CD8-positive, alpha-beta T cell (primary cell): ENCODE measurements at regions of chr3 and their contacts with region 1.

Region 1: DNA sequence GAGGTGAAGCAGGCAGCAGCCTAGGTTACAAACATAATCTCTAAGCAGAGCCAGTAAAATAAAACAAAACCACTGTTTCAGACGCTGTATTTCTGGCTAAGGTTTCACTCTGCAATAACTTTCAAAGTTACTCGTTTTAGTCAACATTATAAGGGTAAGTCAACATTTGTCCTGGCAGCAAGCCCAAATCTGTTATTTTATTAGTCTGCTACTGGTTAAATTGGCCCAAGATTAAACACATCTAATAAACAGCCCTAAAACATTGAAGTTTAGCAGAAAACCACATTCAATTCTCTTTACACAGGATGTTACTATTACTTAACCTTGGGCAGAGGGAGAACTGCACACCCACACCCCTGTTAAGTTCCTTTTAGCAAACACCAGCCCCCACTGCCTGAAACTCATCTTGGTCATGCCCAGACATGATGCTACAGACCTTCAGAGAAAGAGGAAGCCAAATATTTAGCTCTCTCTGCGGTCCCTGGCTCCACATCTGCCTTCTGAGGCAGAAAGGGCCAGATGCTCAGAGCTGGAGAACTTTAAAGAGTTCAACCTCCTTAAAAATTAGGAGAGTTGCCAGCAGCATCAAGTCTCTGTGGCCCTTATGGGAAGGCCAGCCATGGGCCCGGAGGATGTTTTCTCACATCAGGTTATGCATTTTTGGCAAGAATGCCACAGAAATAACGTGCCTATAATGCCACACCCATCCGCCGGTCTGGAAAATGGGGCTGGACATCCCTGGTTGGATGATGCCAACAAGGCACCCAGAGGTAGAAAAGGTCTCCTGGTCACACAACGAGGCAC is 17.9 kb downstream of the ARHGEF3 start:
- DNase-seq: peak; percentile 46 to 91 (median 75)
- ATAC-seq: peak; percentile 79
- H3K4me3 ChIP-seq: peak overlapping the region; percentile 10 to 24
- H3K4me3 Mint-ChIP-seq: peak overlapping the region; percentile 67
- H3K27ac ChIP-seq: peak overlapping the region; percentile 51 to 80
- H3K27ac Mint-ChIP-seq: peak overlapping the region; percentile 88
- H3K4me1 ChIP-seq: peaks cover 98% of the 10 kb centered on the region
- H3K4me1 Mint-ChIP-seq: peaks cover 97% of the 10 kb centered on the region
- H3K27me3 ChIP-seq: no peaks in the 10 kb centered on the region
- H3K27me3 Mint-ChIP-seq: no peaks in the 10 kb centered on the region
- CTCF ChIP-seq: no peak

Region 2: DNA sequence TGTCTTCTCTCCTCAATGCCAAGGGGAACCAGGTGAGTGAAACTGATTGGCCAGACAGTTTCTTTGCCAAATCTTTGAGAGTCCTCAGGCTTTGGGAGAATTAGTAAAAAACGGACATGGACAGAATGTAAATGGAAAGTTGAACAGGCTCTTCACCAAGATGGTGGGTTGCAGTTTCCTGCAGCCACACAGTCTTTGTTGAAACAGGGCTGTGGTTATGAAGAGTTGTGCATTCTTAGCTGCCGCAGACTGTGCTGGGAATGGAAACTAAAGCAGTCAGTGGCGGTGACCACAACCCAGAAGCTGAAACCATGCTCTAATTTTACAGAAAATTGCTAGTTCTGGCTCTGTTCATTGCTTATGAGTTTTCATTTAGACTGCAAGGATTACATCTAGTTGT is 58.7 kb before region 1 on chr3:
- CTCF ChIA-PET with region 1: interaction called, 6 read pairs
- POLR2A ChIA-PET with region 1: interaction called, 11 read pairs
- intact Hi-C with region 1: loop called in 1 of 2 experiments (anchors 5 kb)
- DNase-seq: peak; percentile 25 to 86 (median 66)
- ATAC-seq: peak; percentile 89
- H3K4me3 ChIP-seq: no peak overlapping the region
- H3K4me3 Mint-ChIP-seq: peak overlapping the region; percentile 65
- H3K27ac ChIP-seq: peak overlapping the region in 1 of 2 experiments; percentile 43
- H3K27ac Mint-ChIP-seq: peak overlapping the region; percentile 92
- H3K4me1 ChIP-seq: peaks cover 46% of the 10 kb centered on the region
- H3K4me1 Mint-ChIP-seq: peaks cover 64% of the 10 kb centered on the region
- H3K27me3 ChIP-seq: no peaks in the 10 kb centered on the region
- H3K27me3 Mint-ChIP-seq: no peaks in the 10 kb centered on the region
- CTCF ChIP-seq: no peak

Region 3: DNA sequence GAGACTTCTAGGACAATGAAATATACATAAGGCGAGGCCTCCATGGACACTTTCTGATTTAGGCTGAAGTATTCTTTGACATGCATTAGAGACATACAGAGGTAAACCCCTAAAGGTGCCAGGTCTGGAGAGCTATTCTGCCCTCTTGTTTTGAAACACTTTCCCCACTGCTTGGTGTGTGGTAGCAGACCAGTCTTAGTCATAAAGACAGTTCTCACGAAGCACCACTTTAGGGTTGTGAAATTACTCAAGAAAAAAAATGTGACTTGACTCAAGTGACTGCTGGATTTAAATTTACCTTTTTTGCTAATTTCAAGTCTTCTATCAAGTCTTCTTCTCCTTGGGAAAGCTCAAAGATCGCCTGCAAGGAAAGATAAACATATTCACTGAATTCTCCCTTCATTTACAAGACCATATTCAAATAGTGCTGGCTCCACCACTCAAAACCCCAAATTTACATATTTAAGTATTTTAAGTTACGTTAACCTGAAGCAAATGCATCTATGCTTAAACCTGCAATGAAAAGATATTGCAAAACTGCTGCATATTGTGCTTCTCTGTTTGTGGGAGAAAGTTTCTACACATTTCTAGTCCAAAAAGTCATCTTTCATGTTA is 30.5 kb before region 1 on chr3:
- CTCF ChIA-PET with region 1: interaction called, 4 read pairs
- POLR2A ChIA-PET with region 1: interaction called, 15 read pairs
- intact Hi-C with region 1: no loop called
- DNase-seq: peak in 5 of 9 experiments; percentile 22 to 56 (median 45)
- ATAC-seq: peak; percentile 27
- H3K4me3 ChIP-seq: no peak overlapping the region
- H3K4me3 Mint-ChIP-seq: peak overlapping the region; percentile 47
- H3K27ac ChIP-seq: peak overlapping the region; percentile 62 to 79
- H3K27ac Mint-ChIP-seq: peak overlapping the region; percentile 100
- H3K4me1 ChIP-seq: peaks cover 52% of the 10 kb centered on the region
- H3K4me1 Mint-ChIP-seq: peaks cover 66% of the 10 kb centered on the region
- H3K27me3 ChIP-seq: no peaks in the 10 kb centered on the region
- H3K27me3 Mint-ChIP-seq: no peaks in the 10 kb centered on the region
- CTCF ChIP-seq: no peak

Region 4: GRCh38 chr3:56758539-56758981 is 25.3 kb before region 1 on chr3:
- CTCF ChIA-PET with region 1: interaction called, 4 read pairs
- POLR2A ChIA-PET with region 1: interaction called, 15 read pairs
- intact Hi-C with region 1: loop called in 1 of 2 experiments (anchors 2 kb)
- DNase-seq: peak in 8 of 9 experiments; percentile 17 to 58 (median 35)
- ATAC-seq: peak; percentile 53
- H3K4me3 ChIP-seq: no peak overlapping the region
- H3K4me3 Mint-ChIP-seq: peak overlapping the region; percentile 48
- H3K27ac ChIP-seq: peak overlapping the region; percentile 41 to 70
- H3K27ac Mint-ChIP-seq: peak overlapping the region; percentile 90
- H3K4me1 ChIP-seq: peaks cover 72% of the 10 kb centered on the region
- H3K4me1 Mint-ChIP-seq: peaks cover 82% of the 10 kb centered on the region
- H3K27me3 ChIP-seq: no peaks in the 10 kb centered on the region
- H3K27me3 Mint-ChIP-seq: no peaks in the 10 kb centered on the region
- CTCF ChIP-seq: no peak

Region 5: DNA sequence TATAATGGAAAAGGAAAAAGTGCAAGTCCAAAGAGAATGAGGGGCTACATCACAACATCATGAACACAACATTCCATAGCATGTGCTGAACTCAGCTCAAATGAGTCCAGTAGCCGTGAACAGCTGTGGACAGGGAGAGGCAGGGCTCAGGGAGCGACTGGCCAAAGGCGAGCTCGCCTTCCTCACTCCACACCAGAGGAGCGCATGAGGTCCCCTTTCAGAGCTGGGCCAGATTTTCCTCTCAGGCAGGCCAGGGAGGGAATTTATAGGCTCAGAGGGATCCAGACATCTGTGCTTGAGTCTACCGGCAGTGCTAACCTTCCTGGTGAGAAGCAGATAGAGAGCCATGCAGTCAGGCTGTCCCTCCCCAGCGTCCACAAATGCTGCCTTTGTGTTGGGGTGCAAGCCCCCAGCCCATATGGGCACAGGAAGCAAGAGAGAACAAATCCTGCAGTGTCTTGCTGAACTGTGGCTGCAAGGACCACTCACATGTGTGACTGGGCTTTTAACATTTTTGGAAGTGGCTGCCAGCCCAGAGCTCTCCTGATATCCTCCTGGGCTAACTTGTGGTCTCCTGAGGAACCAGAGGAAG is 14.6 kb before region 1 on chr3:
- CTCF ChIA-PET with region 1: interaction called, 8 read pairs
- POLR2A ChIA-PET with region 1: interaction called, 6 read pairs
- intact Hi-C with region 1: loop called in 1 of 2 experiments (anchors 1 kb)
- DNase-seq: no peak
- ATAC-seq: no peak
- H3K4me3 ChIP-seq: no peak overlapping the region
- H3K4me3 Mint-ChIP-seq: no peak overlapping the region
- H3K27ac ChIP-seq: peak overlapping the region in 1 of 2 experiments; percentile 41
- H3K27ac Mint-ChIP-seq: peak overlapping the region; percentile 77
- H3K4me1 ChIP-seq: peaks cover 53% of the 10 kb centered on the region
- H3K4me1 Mint-ChIP-seq: peaks cover 74% of the 10 kb centered on the region
- H3K27me3 ChIP-seq: no peaks in the 10 kb centered on the region
- H3K27me3 Mint-ChIP-seq: no peaks in the 10 kb centered on the region
- CTCF ChIP-seq: no peak